ENCODE measurements at regions of chr1 and their contacts with region 1.

Region 1: DNA sequence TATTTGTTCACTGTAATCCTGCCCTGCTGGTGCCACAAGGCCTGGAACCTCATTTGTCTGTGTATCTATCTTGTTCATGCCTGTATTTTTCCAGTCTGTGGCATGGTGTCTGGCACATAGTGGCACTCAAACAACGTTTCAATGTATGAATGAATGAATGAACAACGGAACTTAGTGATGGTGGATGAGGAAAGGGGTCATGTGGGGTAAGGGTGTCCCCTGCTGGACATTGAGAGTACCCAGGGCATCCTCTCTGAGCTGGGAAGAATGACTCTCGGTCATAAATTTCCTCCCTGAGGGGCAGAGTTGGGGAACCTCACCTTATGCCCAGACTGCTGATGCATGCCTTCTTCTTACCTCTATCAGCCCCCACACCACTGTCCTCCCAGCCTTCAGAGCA is 18.9 kb upstream of the ZNF683 start:
- DNase-seq: no peak
- H3K4me3 ChIP-seq: no peak overlapping the region
- H3K27me3 ChIP-seq: 0 out of 2 replicates have a peak, but pooled peaks cover 1% of the 10 kb centered on the region
- CTCF ChIP-seq: peak; percentile 89

Region 2: DNA sequence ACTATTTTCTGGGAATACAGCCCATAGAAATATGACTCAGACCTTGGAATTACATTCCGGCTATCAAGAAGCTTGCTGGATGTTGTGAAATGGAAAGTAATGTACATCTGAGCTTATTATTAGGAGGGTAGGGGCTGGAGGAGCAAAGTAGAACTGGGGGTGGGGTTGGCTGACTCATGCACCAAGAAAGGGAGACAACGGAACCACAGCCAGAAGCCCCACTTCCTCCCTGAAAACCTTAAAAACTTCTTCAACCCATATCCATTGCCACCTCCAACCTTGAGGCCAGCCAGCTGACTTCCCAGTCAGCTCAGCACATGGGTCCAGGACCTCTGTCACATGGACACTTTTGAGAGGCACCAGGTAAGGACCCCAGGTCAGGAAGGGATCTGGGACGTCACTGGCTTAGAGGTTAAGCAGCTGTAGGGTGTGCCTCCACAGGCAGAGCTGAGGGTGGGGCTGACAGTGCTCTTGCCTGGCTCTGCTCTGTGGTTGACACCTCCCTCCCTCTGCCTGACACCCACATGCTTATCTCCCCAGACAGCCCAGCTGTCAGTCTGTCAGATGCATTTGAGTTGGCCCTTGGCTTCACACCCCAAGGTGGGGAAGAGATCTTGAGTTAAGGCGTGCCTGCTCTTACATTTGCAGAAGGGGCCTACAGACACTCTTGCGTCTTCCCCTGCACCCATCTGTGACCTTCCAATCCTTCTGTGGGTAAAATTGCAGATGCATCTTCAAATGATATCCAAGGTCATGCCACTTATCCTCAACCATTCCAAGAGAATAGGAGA is 13.2 kb before region 1 on chr1:
- CTCF ChIA-PET with region 1: interaction called, 11 read pairs
- POLR2A ChIA-PET with region 1: no interaction called
- DNase-seq: peak; percentile 97
- H3K4me3 ChIP-seq: no peak overlapping the region
- H3K27me3 ChIP-seq: no peaks in the 10 kb centered on the region
- CTCF ChIP-seq: no peak

Region 3: GRCh38 chr1:26459573-26460031 is 68.2 kb after region 1 on chr1:
- CTCF ChIA-PET with region 1: no interaction called
- POLR2A ChIA-PET with region 1: no interaction called
- DNase-seq: no peak
- H3K4me3 ChIP-seq: no peak overlapping the region
- H3K27me3 ChIP-seq: no peaks in the 10 kb centered on the region
- CTCF ChIP-seq: no peak

Measured in BJ (cell line).